ENCODE measurements at regions of chr20 and their contacts with region 1.

Region 1: GRCh38 chr20:44750081-44750805 is 4.6 kb downstream of the KCNK15 start:
- DNase-seq: no peak
- H3K4me3 ChIP-seq: no peak overlapping the region
- CTCF ChIP-seq: no peak
- POLR2A ChIP-seq: no peak

Region 2: GRCh38 chr20:44866703-44867335 is 116.6 kb after region 1 on chr20:
- intact Hi-C with region 1: loop called (anchors 5 kb)
- DNase-seq: no peak
- H3K4me3 ChIP-seq: no peak overlapping the region
- CTCF ChIP-seq: no peak
- POLR2A ChIP-seq: no peak

Region 3: DNA sequence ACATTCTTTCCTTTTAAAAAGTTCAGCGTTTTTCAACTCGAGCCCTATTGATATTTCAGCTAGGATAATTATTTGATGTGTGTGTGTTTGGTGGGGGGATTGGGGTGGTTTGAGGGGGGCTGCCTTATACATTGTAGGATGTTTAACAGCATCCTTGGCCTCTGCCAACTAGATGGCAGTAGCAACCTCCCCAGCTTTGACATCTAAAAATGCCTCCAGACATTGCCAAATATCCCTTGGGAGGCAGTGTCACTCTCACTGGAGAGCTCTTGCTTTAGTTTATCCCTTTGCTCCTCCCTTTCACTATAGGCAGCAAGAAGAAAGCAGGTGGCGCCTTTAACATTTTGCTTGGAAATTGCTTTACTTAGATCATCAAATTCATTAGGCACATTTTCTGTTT is 642.5 kb after region 1 on chr20:
- intact Hi-C with region 1: no loop called
- DNase-seq: no peak
- H3K4me3 ChIP-seq: no peak overlapping the region
- CTCF ChIP-seq: no peak
- POLR2A ChIP-seq: no peak

Measured in lower leg skin (tissue), 4 donors.